MCF 10A (cell line): ENCODE measurements at regions of chr4 and their contacts with region 1.

Region 1: GRCh38 chr4:118224239-118224829 is 128.5 kb downstream of the PRSS12 start:
- DNase-seq: peak; percentile 75
- H3K4me3 Mint-ChIP-seq: no peak overlapping the region
- H3K27ac Mint-ChIP-seq: no peak overlapping the region
- H3K4me1 Mint-ChIP-seq: no peaks in the 10 kb centered on the region
- H3K27me3 Mint-ChIP-seq: no peaks in the 10 kb centered on the region
- CTCF ChIP-seq: peak; percentile 70

Region 2: DNA sequence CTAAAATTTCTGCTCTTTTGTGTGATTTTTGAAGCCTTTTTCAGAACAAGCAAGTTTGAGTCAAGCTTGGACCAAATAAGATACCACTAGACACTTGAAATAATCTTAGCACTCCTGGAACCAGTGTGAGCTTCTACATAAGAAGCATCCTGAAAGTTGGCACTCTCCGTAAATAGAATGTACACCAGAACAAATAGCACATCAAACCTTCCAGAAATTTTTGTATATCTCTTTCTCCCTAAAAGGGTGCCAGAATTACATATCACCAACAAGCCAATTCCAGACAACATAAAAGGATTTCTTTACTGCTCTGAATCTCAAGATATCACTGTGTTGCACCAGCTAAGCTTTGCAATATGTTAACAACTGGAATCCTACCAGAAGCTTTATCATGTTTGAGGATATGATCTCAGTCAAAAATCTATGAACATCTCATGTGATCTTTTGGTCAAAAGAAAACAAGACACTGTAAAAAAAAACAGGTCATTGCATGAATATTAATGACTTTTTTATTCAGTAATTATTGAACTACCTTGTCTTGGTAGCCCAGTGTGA is 11.3 kb after region 1 on chr4:
- CTCF ChIA-PET with region 1: interaction called, 27 read pairs
- POLR2A ChIA-PET with region 1: no interaction called
- intact Hi-C with region 1: no loop called
- DNase-seq: no peak
- H3K4me3 Mint-ChIP-seq: no peak overlapping the region
- H3K27ac Mint-ChIP-seq: no peak overlapping the region
- H3K4me1 Mint-ChIP-seq: no peaks in the 10 kb centered on the region
- H3K27me3 Mint-ChIP-seq: no peaks in the 10 kb centered on the region
- CTCF ChIP-seq: no peak